Dendritic cell treated with granulocyte-macrophage colony-stimulating factor and Interleukin-4, amounts not matched to agents 40 ng/mL and 50 ng/mL, for 4 days (primary cell): ENCODE measurements at regions of chr19 and their contacts with region 1.

Region 1: GRCh38 chr19:18173572-18174288 is at the start of gene IFI30:
- H3K4me3 Mint-ChIP-seq: peak within 1 kb of the TSS; percentile 96
- H3K27ac Mint-ChIP-seq: peak within 1 kb of the TSS; percentile 99
- H3K4me1 Mint-ChIP-seq: peaks cover 84% of the 10 kb centered on the region
- H3K27me3 Mint-ChIP-seq: no peaks in the 10 kb centered on the region

Region 2: GRCh38 chr19:18007044-18007916 is 166.4 kb before region 1 on chr19:
- intact Hi-C with region 1: loop called (anchors 10 kb)
- H3K4me3 Mint-ChIP-seq: peak overlapping the region; percentile 89
- H3K27ac Mint-ChIP-seq: peak overlapping the region; percentile 80
- H3K4me1 Mint-ChIP-seq: peaks cover 43% of the 10 kb centered on the region
- H3K27me3 Mint-ChIP-seq: no peaks in the 10 kb centered on the region

Region 3: DNA sequence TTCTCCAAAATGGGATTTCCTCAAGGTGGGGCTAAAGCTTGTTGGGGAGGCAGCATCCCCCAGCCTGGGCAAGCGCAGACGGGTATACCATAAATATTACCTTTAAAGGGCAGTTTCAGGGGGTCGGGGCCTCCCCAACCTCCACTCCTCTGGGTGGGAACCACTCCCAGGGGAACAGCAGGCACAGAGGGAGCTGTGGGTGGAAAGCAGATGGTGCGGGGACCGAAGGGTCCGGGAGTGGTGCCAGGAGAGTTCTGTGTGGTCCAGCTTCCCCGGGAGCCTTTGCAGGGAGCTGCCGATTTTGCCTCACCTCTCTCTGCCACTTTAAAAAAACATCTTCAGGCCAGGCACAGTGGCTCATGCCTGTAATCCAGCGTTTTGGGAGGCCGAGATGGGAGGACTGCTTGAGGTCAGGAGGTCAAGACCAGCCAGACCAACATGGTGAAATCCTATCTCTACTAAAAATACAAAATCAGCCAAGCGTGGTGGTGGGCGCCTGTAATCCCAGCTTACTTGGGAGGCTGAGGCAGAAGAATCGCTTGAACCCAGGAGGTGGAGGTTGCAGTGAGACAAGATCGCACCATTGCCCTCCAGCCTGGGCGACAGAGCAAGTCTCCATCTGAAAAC is 70.7 kb before region 1 on chr19:
- intact Hi-C with region 1: no loop called
- H3K4me3 Mint-ChIP-seq: no peak overlapping the region
- H3K27ac Mint-ChIP-seq: no peak overlapping the region
- H3K4me1 Mint-ChIP-seq: peaks cover 50% of the 10 kb centered on the region
- H3K27me3 Mint-ChIP-seq: peaks cover 14% of the 10 kb centered on the region

Region 4: GRCh38 chr19:18192673-18193387 is 19.1 kb after region 1 on chr19 and contains the start of gene MPV17L2:
- intact Hi-C with region 1: loop called (anchors 2 kb)
- H3K4me3 Mint-ChIP-seq: peak within 1 kb of the TSS; percentile 86
- H3K27ac Mint-ChIP-seq: peak within 1 kb of the TSS; percentile 92
- H3K4me1 Mint-ChIP-seq: peaks cover 17% of the 10 kb centered on the region
- H3K27me3 Mint-ChIP-seq: no peaks in the 10 kb centered on the region